ENCODE measurements at regions of chr6 and their contacts with region 1.

Region 1: DNA sequence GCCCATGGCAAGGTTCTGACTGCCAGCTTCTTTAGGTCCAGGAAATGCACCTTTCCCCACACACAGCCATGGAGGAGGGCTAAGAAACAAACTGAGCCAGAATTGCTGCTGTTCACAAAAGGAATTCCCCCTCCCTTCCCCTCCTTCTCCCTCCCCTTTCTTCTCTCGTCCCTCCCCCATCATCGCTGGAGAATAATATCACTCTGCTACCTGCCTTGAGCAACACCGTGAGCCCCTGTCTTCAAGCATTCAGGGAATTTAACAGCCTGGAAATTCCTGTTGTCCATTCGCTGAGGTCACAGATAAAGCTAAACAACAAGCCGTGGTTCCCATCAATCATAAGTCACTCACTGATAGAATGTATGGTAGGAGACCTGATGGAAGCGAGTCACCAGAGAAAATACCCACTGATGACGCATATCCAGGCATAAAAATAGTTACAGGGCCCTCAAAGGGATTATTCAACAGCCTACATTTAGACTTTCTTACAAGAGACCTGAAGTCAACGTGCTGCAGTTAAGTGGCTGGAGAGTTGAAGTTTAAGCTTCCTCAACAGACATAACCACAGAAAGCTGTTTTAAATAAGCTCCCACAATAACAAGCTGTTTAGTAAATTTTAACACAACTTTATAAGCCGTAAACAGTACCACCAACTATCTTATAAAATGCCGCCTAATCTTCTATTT is 59.7 kb downstream of the HIVEP2 start:
- DNase-seq: peak; percentile 87 to 98 (median 96)
- H3K4me3 ChIP-seq: peak overlapping the region in 6 of 7 experiments; percentile 28 to 74 (median 57)
- H3K27ac ChIP-seq: peak overlapping the region; percentile 84 to 89
- H3K4me1 ChIP-seq: peaks cover 13 to 29% (median 27%) of the 10 kb centered on the region in 4 experiments
- H3K27me3 ChIP-seq: no peaks in the 10 kb centered on the region

Region 2: GRCh38 chr6:142746524-142746923 is 138.8 kb before region 1 on chr6:
- CTCF ChIA-PET with region 1: interaction called, 13 read pairs
- POLR2A ChIA-PET with region 1: interaction called, 3 read pairs
- DNase-seq: peak; percentile 62 to 73 (median 69)
- H3K4me3 ChIP-seq: no peak overlapping the region
- H3K27ac ChIP-seq: no peak overlapping the region
- H3K4me1 ChIP-seq: no peaks in the 10 kb centered on the region
- H3K27me3 ChIP-seq: no peaks in the 10 kb centered on the region

Region 3: GRCh38 chr6:142871910-142872331 is 13.4 kb before region 1 on chr6:
- CTCF ChIA-PET with region 1: interaction called, 14 read pairs
- POLR2A ChIA-PET with region 1: interaction called, 5 read pairs
- DNase-seq: peak; percentile 56 to 86 (median 83)
- H3K4me3 ChIP-seq: no peak overlapping the region
- H3K27ac ChIP-seq: no peak overlapping the region
- H3K4me1 ChIP-seq: peaks cover 24 to 32% (median 28%) of the 10 kb centered on the region in 4 experiments
- H3K27me3 ChIP-seq: no peaks in the 10 kb centered on the region